Common myeloid progenitor, CD34-positive (primary cell): ENCODE measurements at regions of chr17 and their contacts with region 1.

Region 1: GRCh38 chr17:81590121-81590520 is 38.0 kb upstream of the FAAP100 start:
- DNase-seq: no peak
- H3K4me3 ChIP-seq: no peak overlapping the region
- H3K27ac ChIP-seq: no peak overlapping the region
- H3K4me1 ChIP-seq: no peaks in the 10 kb centered on the region
- H3K27me3 ChIP-seq: no peaks in the 10 kb centered on the region

Region 2: GRCh38 chr17:81471804-81472456 is 118.2 kb before region 1 on chr17:
- CTCF ChIA-PET with region 1: no interaction called
- POLR2A ChIA-PET with region 1: no interaction called
- DNase-seq: peak in 2 of 3 donors; percentile 47 to 50
- H3K4me3 ChIP-seq: no peak overlapping the region
- H3K27ac ChIP-seq: no peak overlapping the region
- H3K4me1 ChIP-seq: peaks cover 0 to 17% (median 3%) of the 10 kb centered on the region in 4 experiments
- H3K27me3 ChIP-seq: no peaks in the 10 kb centered on the region

Region 3: DNA sequence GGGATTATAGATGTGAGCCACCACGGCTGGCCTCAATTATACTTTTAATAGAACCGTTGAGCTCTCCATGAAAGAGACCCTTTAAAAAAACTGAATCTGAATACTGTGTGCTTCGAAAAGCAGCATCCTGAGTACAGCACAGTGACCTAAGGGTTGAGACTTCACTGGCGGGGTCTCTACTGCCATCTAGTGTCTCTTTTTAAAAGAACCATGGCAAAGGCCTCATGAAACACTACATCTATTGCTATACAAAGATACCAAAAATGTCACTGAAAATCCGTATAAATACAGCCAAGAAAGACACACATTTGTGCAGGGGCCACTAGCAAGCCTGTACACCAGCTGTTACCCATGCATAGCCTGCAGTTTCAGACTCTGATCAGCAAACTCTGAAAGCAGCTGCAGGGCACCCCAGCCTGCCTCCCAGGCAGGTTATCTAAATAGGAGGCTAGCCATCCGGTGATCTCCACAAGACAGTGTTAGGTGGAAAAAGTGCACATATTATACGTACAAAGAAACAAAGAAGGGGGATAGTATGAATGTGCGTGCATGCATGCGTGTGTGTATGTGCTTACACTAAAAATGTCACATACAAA is 11.5 kb after region 1 on chr17:
- CTCF ChIA-PET with region 1: interaction called, 13 read pairs
- POLR2A ChIA-PET with region 1: no interaction called
- DNase-seq: peak; percentile 65 to 86 (median 76)
- H3K4me3 ChIP-seq: no peak overlapping the region
- H3K27ac ChIP-seq: no peak overlapping the region
- H3K4me1 ChIP-seq: no peaks in the 10 kb centered on the region
- H3K27me3 ChIP-seq: no peaks in the 10 kb centered on the region